B cell (primary cell): ENCODE measurements at regions of chr1 and their contacts with region 1.

Region 1: DNA sequence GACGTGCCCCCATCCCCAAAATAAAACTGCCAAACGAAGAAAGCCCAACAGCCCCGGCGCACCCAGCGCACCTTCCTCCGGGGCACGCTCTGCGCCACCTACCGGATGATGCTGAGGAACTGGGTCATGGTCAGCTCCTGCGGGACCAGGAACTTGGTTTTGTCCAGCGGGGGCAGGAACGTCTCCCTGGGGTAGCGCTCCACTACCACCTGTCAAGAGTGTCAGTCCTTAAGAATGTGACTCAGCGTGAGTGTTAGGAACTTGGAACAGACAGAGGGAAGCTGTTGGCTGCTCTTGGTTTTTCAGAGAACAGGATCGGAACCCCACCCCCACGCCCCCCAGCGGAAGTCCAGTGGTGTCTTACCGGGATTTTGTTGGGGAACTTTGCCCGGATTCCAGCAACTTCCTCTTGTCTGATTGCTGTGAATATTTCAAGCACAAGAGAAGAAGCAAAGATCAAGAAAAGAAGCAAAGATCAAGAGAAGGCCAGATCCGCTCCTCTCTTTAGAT is 431 bp downstream of the MAP1LC3C start:
- DNase-seq: peak; percentile 75
- ATAC-seq: peak; percentile 85
- H3K4me3 ChIP-seq: peak overlapping the region; percentile 30 to 70 (median 50)
- H3K4me3 Mint-ChIP-seq: peak overlapping the region; percentile 85
- H3K27ac ChIP-seq: no peak overlapping the region
- H3K27ac Mint-ChIP-seq: no peak overlapping the region
- H3K4me1 ChIP-seq: peaks cover 0 to 7% of the 10 kb centered on the region in 2 donors
- H3K4me1 Mint-ChIP-seq: peaks cover 5% of the 10 kb centered on the region
- H3K27me3 ChIP-seq: peaks cover 0 to 1% (median 0%) of the 10 kb centered on the region in 4 experiments
- H3K27me3 Mint-ChIP-seq: peaks cover 2% of the 10 kb centered on the region
- CTCF ChIP-seq: peak; percentile 77

Region 2: DNA sequence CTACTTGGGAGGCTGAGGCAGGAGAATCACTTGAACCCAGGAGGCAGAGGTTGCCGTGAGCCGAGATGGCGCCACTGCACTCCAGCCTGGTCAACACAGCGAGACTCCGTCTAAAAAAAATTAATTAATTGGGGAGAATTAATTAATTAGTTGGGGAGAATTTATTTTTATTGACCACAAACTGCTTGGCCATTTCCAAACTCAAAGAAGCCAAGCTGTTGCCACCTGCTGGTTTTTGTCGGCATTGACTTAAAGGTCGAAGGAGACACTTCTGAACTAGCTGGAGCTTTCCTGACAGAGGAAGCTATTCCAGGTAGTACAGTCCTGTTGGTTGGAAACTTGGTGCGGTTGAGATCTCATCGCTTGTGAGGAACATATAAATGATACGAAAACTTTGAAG is 12.7 kb before region 1 on chr1:
- CTCF ChIA-PET with region 1: interaction called, 20 read pairs
- POLR2A ChIA-PET with region 1: no interaction called
- intact Hi-C with region 1: no loop called
- DNase-seq: peak; percentile 27
- ATAC-seq: no peak
- H3K4me3 ChIP-seq: no peak overlapping the region
- H3K4me3 Mint-ChIP-seq: no peak overlapping the region
- H3K27ac ChIP-seq: no peak overlapping the region
- H3K27ac Mint-ChIP-seq: no peak overlapping the region
- H3K4me1 ChIP-seq: no peaks in the 10 kb centered on the region
- H3K4me1 Mint-ChIP-seq: no peaks in the 10 kb centered on the region
- H3K27me3 ChIP-seq: no peaks in the 10 kb centered on the region
- H3K27me3 Mint-ChIP-seq: no peaks in the 10 kb centered on the region
- CTCF ChIP-seq: peak; percentile 19